ENCODE measurements at regions of chr13 and their contacts with region 1.

Region 1: GRCh38 chr13:27826379-27827353 is 34.4 kb downstream of the GSX1 start:
- DNase-seq: peak; percentile 84
- ATAC-seq: peak; percentile 86
- H3K4me3 ChIP-seq: peak overlapping the region; percentile 35 to 54
- H3K27ac ChIP-seq: 0 out of 2 replicates have a peak overlapping the region, but pooled peaks have one; percentile 27
- H3K4me1 ChIP-seq: peaks cover 4 to 20% of the 10 kb centered on the region in 2 experiments; a peak in 3 of 4 replicates
- H3K27me3 ChIP-seq: peaks cover 15% of the 10 kb centered on the region
- CTCF ChIP-seq: peak; percentile 93 to 96 (median 94)
- POLR2A ChIP-seq: no peak
- RAD21 ChIP-seq: peak; percentile 89

Region 2: GRCh38 chr13:26946684-26947343 is 879.9 kb before region 1 on chr13:
- CTCF ChIA-PET with region 1: interaction called, 20 read pairs
- POLR2A ChIA-PET with region 1: no interaction called
- RAD21 ChIA-PET with region 1: interaction called in 1 of 2 experiments, 3 read pairs
- intact Hi-C with region 1: loop called (anchors 1 kb)
- DNase-seq: peak; percentile 44
- ATAC-seq: peak; percentile 96
- H3K4me3 ChIP-seq: no peak overlapping the region
- H3K27ac ChIP-seq: no peak overlapping the region
- H3K4me1 ChIP-seq: peaks cover 0 to 2% of the 10 kb centered on the region in 2 experiments; a peak in 1 of 4 replicates
- H3K27me3 ChIP-seq: peaks cover 4% of the 10 kb centered on the region; the same call in 1 of the 2 replicates
- CTCF ChIP-seq: peak; percentile 62 to 81 (median 74)
- POLR2A ChIP-seq: no peak
- RAD21 ChIP-seq: peak; percentile 86

Region 3: GRCh38 chr13:27374650-27375049 is 452.0 kb before region 1 on chr13:
- CTCF ChIA-PET with region 1: interaction called, 15 read pairs
- POLR2A ChIA-PET with region 1: no interaction called
- RAD21 ChIA-PET with region 1: interaction called, 4 read pairs
- intact Hi-C with region 1: loop called (anchors 1 kb)
- DNase-seq: peak; percentile 85
- ATAC-seq: peak; percentile 96
- H3K4me3 ChIP-seq: no peak overlapping the region
- H3K27ac ChIP-seq: no peak overlapping the region
- H3K4me1 ChIP-seq: peaks cover 12 to 22% of the 10 kb centered on the region in 2 experiments; a peak in 3 of 4 replicates
- H3K27me3 ChIP-seq: no peaks in the 10 kb centered on the region
- CTCF ChIP-seq: peak; percentile 67 to 82 (median 79); a peak in 5 of 6 replicates
- POLR2A ChIP-seq: no peak
- RAD21 ChIP-seq: peak; percentile 80

Region 4: GRCh38 chr13:27424246-27425157 is 402.2 kb before region 1 on chr13 and contains the start of gene GTF3A:
- CTCF ChIA-PET with region 1: interaction called, 14 read pairs
- POLR2A ChIA-PET with region 1: interaction called, 4 read pairs
- RAD21 ChIA-PET with region 1: no interaction called
- intact Hi-C with region 1: no loop called
- DNase-seq: peak; percentile 54
- ATAC-seq: peak; percentile 69
- H3K4me3 ChIP-seq: peak within 1 kb of the TSS; percentile 63 to 70
- H3K27ac ChIP-seq: peak within 1 kb of the TSS; percentile 82
- H3K4me1 ChIP-seq: peaks cover 29 to 50% of the 10 kb centered on the region in 2 experiments
- H3K27me3 ChIP-seq: no peaks in the 10 kb centered on the region
- CTCF ChIP-seq: no peak
- POLR2A ChIP-seq: peak; percentile 85
- RAD21 ChIP-seq: no peak
- total RNA-seq, gene GTF3A: 102 TPM

Region 5: DNA sequence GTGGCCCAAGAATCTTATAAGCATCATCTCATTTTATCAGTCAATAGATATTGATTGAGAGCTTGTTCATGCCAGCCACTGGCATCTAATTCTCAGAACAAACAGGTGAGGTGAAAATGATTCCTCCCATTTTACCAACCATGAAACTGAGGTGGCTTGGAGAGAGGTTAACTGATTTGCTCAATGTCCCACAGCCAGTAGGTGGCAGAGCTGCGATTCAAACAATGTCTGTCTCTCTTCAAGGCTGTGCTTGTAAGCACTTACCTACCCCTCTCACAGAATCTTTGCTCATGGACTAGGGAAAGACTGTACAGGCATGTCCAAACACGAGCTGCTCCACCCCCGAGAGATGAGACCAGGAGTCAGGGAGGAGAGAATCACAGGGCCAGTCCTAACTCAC is 55.9 kb before region 1 on chr13:
- CTCF ChIA-PET with region 1: interaction called, 54 read pairs
- POLR2A ChIA-PET with region 1: no interaction called
- RAD21 ChIA-PET with region 1: interaction called, 6 to 7 read pairs
- intact Hi-C with region 1: loop called (anchors 2 kb)
- DNase-seq: peak; percentile 31
- ATAC-seq: peak; percentile 97
- H3K4me3 ChIP-seq: no peak overlapping the region
- H3K27ac ChIP-seq: no peak overlapping the region
- H3K4me1 ChIP-seq: no peaks in the 10 kb centered on the region
- H3K27me3 ChIP-seq: no peaks in the 10 kb centered on the region
- CTCF ChIP-seq: peak; percentile 57 to 72 (median 68); a peak in 5 of 6 replicates
- POLR2A ChIP-seq: no peak
- RAD21 ChIP-seq: peak; percentile 57; the same call in 1 of the 2 replicates

Region 6: GRCh38 chr13:27868641-27869435 is 42.2 kb after region 1 on chr13:
- CTCF ChIA-PET with region 1: interaction called, 11 read pairs
- POLR2A ChIA-PET with region 1: no interaction called
- RAD21 ChIA-PET with region 1: no interaction called
- intact Hi-C with region 1: no loop called
- DNase-seq: peak; percentile 7
- ATAC-seq: peak; percentile 53; the same call in 1 of the 2 replicates
- H3K4me3 ChIP-seq: peak overlapping the region in 1 of 2 experiments; percentile 5; a peak in 1 of 4 replicates
- H3K27ac ChIP-seq: no peak overlapping the region
- H3K4me1 ChIP-seq: peaks cover 0 to 6% of the 10 kb centered on the region in 2 experiments; a peak in 1 of 4 replicates
- H3K27me3 ChIP-seq: no peaks in the 10 kb centered on the region
- CTCF ChIP-seq: peak; percentile 34 to 68 (median 52); a peak in 5 of 6 replicates
- POLR2A ChIP-seq: no peak
- RAD21 ChIP-seq: peak; percentile 29

Region 7: GRCh38 chr13:27980280-27980998 is 153.8 kb after region 1 on chr13:
- CTCF ChIA-PET with region 1: interaction called, 35 read pairs
- POLR2A ChIA-PET with region 1: interaction called, 3 read pairs
- RAD21 ChIA-PET with region 1: interaction called, 4 to 8 read pairs
- intact Hi-C with region 1: loop called (anchors 1 kb)
- DNase-seq: no peak
- ATAC-seq: no peak
- H3K4me3 ChIP-seq: no peak overlapping the region
- H3K27ac ChIP-seq: no peak overlapping the region
- H3K4me1 ChIP-seq: no peaks in the 10 kb centered on the region
- H3K27me3 ChIP-seq: no peaks in the 10 kb centered on the region
- CTCF ChIP-seq: no peak
- POLR2A ChIP-seq: no peak
- RAD21 ChIP-seq: no peak

Region 8: GRCh38 chr13:28058866-28059624 is 232.4 kb after region 1 on chr13:
- CTCF ChIA-PET with region 1: no interaction called
- POLR2A ChIA-PET with region 1: no interaction called
- RAD21 ChIA-PET with region 1: no interaction called
- intact Hi-C with region 1: no loop called
- DNase-seq: peak; percentile 43
- ATAC-seq: peak; percentile 88
- H3K4me3 ChIP-seq: no peak overlapping the region
- H3K27ac ChIP-seq: no peak overlapping the region
- H3K4me1 ChIP-seq: no peaks in the 10 kb centered on the region
- H3K27me3 ChIP-seq: no peaks in the 10 kb centered on the region
- CTCF ChIP-seq: peak; percentile 46 to 82 (median 74); a peak in 5 of 6 replicates
- POLR2A ChIP-seq: no peak
- RAD21 ChIP-seq: peak; percentile 65

Measured in HCT116 (cell line).